HEK293 (cell line): ENCODE measurements at regions of chr6 and their contacts with region 1.

Region 1: GRCh38 chr6:166156942-166157341 is 10.7 kb downstream of the TBXT start:
- H3K4me3 ChIP-seq: no peak overlapping the region
- H3K27ac ChIP-seq: no peak overlapping the region
- H3K4me1 ChIP-seq: no peaks in the 10 kb centered on the region
- CTCF ChIP-seq: peak; percentile 27; the same call in 1 of the 2 replicates

Region 2: GRCh38 chr6:165605901-165606664 is 550.9 kb before region 1 on chr6:
- CTCF ChIA-PET with region 1: no interaction called
- POLR2A ChIA-PET with region 1: no interaction called
- H3K4me3 ChIP-seq: no peak overlapping the region
- H3K27ac ChIP-seq: no peak overlapping the region
- H3K4me1 ChIP-seq: no peaks in the 10 kb centered on the region
- CTCF ChIP-seq: no peak

Region 3: GRCh38 chr6:166127624-166128472 is 29.1 kb before region 1 on chr6:
- CTCF ChIA-PET with region 1: interaction called, 10 read pairs
- POLR2A ChIA-PET with region 1: no interaction called
- H3K4me3 ChIP-seq: no peak overlapping the region
- H3K27ac ChIP-seq: no peak overlapping the region
- H3K4me1 ChIP-seq: no peaks in the 10 kb centered on the region
- CTCF ChIP-seq: no peak

Region 4: DNA sequence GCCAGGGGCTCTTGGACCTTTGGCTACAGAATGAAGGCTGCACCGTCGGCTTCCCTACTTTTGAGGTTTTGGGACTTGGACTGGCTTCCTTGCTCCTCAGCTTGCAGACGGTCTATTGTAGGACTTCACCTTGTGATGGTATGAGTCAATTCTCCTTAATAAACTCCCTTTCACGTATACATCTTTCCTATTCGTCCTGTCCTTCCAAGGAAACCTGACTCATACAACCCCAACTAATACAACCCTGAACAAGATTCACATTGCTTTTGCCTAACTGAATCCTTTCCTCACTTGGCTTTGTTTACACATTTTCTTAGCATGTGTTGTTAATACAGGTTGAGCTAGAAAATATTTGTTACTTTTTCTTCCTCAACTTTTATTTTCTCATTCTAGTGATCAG is 11.2 kb before region 1 on chr6:
- CTCF ChIA-PET with region 1: interaction called, 16 read pairs
- POLR2A ChIA-PET with region 1: interaction called, 4 read pairs
- H3K4me3 ChIP-seq: no peak overlapping the region
- H3K27ac ChIP-seq: no peak overlapping the region
- H3K4me1 ChIP-seq: no peaks in the 10 kb centered on the region
- CTCF ChIP-seq: no peak